IMR-90 (cell line): ENCODE measurements at regions of chr19 and their contacts with region 1.

Region 1: DNA sequence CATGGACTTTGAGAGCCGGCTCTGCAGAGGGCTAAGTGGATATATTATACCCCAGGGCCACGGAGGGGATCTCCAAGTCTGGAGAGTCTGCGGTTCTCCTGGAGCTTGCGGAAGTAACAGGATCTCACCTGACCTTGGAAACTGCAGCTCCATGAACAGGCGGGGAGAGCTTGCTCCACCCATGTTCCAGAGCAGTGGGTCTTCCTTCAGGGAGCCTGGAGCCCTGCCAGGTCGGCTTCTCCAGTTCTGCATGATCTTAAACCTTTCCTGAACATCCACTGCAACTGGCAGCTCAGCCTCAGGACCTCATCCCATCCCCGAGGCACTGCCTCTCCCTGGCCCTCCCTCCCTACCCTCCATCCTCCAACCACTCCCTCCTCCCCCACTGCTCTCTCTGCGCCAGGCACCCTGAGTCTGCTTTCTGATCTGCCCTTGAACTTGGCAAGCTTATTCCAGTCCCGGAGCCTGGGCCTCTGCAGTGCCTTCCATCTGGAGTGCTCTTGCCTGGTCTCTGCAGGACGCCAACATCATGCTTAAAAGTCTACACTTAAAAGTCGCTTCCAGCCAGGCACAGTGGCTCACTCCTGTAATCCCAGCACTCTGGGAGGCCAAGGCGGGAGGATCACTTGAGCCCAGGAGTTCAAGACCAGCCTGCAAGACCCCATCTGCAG is 13.2 kb downstream of the ATCAY start:
- DNase-seq: no peak
- ATAC-seq: no peak
- H3K4me3 ChIP-seq: no peak overlapping the region
- H3K27ac ChIP-seq: no peak overlapping the region
- H3K4me1 ChIP-seq: no peaks in the 10 kb centered on the region
- H3K27me3 ChIP-seq: peaks cover 5% of the 10 kb centered on the region; the same call in 1 of the 2 replicates
- CTCF ChIP-seq: no peak
- POLR2A ChIP-seq: no peak
- RAD21 ChIP-seq: no peak

Region 2: GRCh38 chr19:3024870-3025550 is 868.6 kb before region 1 on chr19:
- CTCF ChIA-PET with region 1: no interaction called
- POLR2A ChIA-PET with region 1: interaction called, 19 read pairs
- dilution Hi-C with region 1: no loop called
- in situ Hi-C with region 1: no loop called
- intact Hi-C with region 1: no loop called
- DNase-seq: no peak
- ATAC-seq: no peak
- H3K4me3 ChIP-seq: no peak overlapping the region
- H3K27ac ChIP-seq: no peak overlapping the region
- H3K4me1 ChIP-seq: no peaks in the 10 kb centered on the region
- H3K27me3 ChIP-seq: peaks cover 50% of the 10 kb centered on the region
- CTCF ChIP-seq: no peak
- POLR2A ChIP-seq: no peak
- RAD21 ChIP-seq: no peak

Region 3: GRCh38 chr19:3907626-3908265 is 14.1 kb after region 1 on chr19:
- CTCF ChIA-PET with region 1: interaction called, 10 read pairs
- POLR2A ChIA-PET with region 1: interaction called, 12 read pairs
- dilution Hi-C with region 1: no loop called
- in situ Hi-C with region 1: no loop called
- intact Hi-C with region 1: no loop called
- DNase-seq: no peak
- ATAC-seq: no peak
- H3K4me3 ChIP-seq: no peak overlapping the region
- H3K27ac ChIP-seq: no peak overlapping the region
- H3K4me1 ChIP-seq: no peaks in the 10 kb centered on the region
- H3K27me3 ChIP-seq: no peaks in the 10 kb centered on the region; the same call in none of the 2 replicates
- CTCF ChIP-seq: no peak
- POLR2A ChIP-seq: no peak
- RAD21 ChIP-seq: no peak

Region 4: DNA sequence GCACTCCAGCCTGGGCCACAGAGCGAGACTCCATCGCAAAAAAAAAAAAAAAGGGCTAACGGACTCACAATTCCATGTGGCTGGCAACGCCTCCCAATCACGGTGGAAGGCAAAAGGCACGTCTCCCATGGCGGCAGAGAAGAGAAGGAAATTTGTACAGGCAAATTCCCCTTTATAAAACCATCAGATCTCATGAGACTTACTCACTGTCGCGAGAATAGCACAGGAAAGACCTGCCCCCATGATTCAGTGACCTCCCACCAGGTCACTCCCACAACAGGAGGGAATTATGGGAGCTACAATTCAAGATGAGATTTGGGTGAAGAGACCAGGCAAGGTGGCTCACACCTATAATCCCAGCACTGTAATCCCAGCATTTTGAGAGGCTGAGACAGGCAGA is 20.6 kb after region 1 on chr19:
- CTCF ChIA-PET with region 1: interaction called, 10 read pairs
- POLR2A ChIA-PET with region 1: no interaction called
- dilution Hi-C with region 1: no loop called
- in situ Hi-C with region 1: no loop called
- intact Hi-C with region 1: no loop called
- DNase-seq: no peak
- ATAC-seq: no peak
- H3K4me3 ChIP-seq: no peak overlapping the region
- H3K27ac ChIP-seq: no peak overlapping the region
- H3K4me1 ChIP-seq: no peaks in the 10 kb centered on the region
- H3K27me3 ChIP-seq: no peaks in the 10 kb centered on the region; the same call in none of the 2 replicates
- CTCF ChIP-seq: no peak
- POLR2A ChIP-seq: no peak
- RAD21 ChIP-seq: no peak